ENCODE measurements at regions of chr11 and their contacts with region 1.

Region 1: GRCh38 chr11:75429902-75430719 is 2.9 kb downstream of the KLHL35 start:
- DNase-seq: peak; percentile 36 to 76 (median 58)
- ATAC-seq: peak; percentile 66 to 75
- H3K4me3 Mint-ChIP-seq: peak overlapping the region; percentile 72 to 91 (median 90)
- H3K27ac Mint-ChIP-seq: peak overlapping the region in 5 of 10 donors; percentile 68 to 81 (median 76)
- H3K4me1 Mint-ChIP-seq: peaks cover 16 to 31% (median 20%) of the 10 kb centered on the region in 4 donors
- H3K27me3 Mint-ChIP-seq: peaks cover 30 to 60% (median 37%) of the 10 kb centered on the region in 5 donors

Region 2: GRCh38 chr11:75399344-75400145 is 30.6 kb before region 1 on chr11 and contains the start of gene RPS3:
- POLR2A ChIA-PET with region 1: interaction called, 14 read pairs
- DNase-seq: peak; percentile 77 to 95 (median 88)
- ATAC-seq: peak; percentile 91 to 92
- H3K4me3 Mint-ChIP-seq: peak within 1 kb of the TSS; percentile 91 to 99 (median 96)
- H3K27ac Mint-ChIP-seq: peak within 1 kb of the TSS; percentile 94 to 99 (median 96)
- H3K4me1 Mint-ChIP-seq: peaks cover 38 to 55% (median 47%) of the 10 kb centered on the region in 4 donors
- H3K27me3 Mint-ChIP-seq: no peaks in the 10 kb centered on the region
- polyA plus RNA-seq, gene RPS3: 6,922 to 7,216 (median 7,023) TPM

Region 3: GRCh38 chr11:75465701-75466531 is 35.8 kb after region 1 on chr11:
- POLR2A ChIA-PET with region 1: no interaction called
- DNase-seq: peak in 1 of 10 donors; percentile 53
- ATAC-seq: no peak
- H3K4me3 Mint-ChIP-seq: no peak overlapping the region
- H3K27ac Mint-ChIP-seq: no peak overlapping the region
- H3K4me1 Mint-ChIP-seq: peaks cover 0 to 3% (median 0%) of the 10 kb centered on the region in 4 donors
- H3K27me3 Mint-ChIP-seq: no peaks in the 10 kb centered on the region

Measured in naive thymus-derived CD8-positive, alpha-beta T cell (primary cell).